A549 (cell line): ENCODE measurements at regions of chr10 and their contacts with region 1.

Region 1: DNA sequence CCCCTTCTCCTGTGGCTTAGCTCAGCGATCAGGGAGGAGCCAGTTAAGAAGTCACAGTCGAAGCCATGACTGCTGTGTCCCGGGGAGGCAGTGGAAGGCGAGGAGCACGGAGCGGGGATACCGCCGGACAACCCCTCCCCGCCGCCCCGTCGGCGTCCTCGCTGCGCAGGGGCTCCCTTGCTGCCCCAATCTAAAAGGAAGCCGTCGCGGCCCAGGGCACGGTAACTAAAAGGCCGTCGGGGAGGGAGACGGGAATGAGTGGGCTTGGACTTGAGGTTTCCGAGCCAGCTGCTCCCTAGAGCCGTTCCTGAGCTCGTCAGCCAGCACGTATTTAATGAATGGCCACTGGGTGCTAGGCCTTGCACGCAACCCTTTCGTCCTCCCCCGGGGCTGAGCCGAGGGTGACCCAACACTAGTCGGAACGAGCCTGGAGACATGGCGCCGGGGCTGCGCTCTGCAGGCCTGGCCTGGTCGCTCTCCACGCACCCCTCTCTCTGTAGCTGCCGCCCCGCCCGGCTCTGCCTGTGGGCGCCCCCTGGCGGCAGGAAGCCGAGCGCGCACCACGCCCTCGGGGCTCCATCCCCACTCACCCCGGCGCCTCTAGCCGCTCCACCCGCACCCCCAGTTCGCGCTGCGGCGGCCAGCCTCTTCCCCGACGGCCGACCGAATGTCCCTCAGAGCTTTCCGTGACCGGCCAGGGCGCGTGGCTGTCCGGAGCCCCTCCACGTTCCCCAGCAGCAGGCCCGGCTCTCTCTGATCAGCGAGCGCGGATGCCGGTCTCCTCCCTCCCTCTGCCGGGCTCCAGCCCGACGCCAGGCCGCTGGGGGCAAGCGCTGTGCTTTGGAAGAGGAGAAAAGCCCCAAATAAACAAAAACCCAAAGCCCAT is 29.3 kb upstream of the KCNK18 start:
- DNase-seq: peak; percentile 62 to 92
- ATAC-seq: peak; percentile 89 to 95
- H3K4me3 ChIP-seq: peak overlapping the region; percentile 55
- H3K27ac ChIP-seq: peak overlapping the region; percentile 71 to 86; a peak in 5 of 6 replicates
- H3K4me1 ChIP-seq: peaks cover 8% of the 10 kb centered on the region; the same call in 2 of the 3 replicates
- CTCF ChIP-seq: peak; percentile 94
- EP300 ChIP-seq: no peak
- POLR2A ChIP-seq: no peak
- RAD21 ChIP-seq: peak; percentile 55 to 72

Region 2: GRCh38 chr10:116683821-116684220 is 484.2 kb before region 1 on chr10:
- CTCF ChIA-PET with region 1: interaction called, 27 read pairs
- POLR2A ChIA-PET with region 1: no interaction called
- DNase-seq: no peak
- ATAC-seq: no peak; a peak in 1 of 6 replicates
- H3K4me3 ChIP-seq: no peak overlapping the region
- H3K27ac ChIP-seq: no peak overlapping the region
- H3K4me1 ChIP-seq: no peaks in the 10 kb centered on the region
- CTCF ChIP-seq: no peak
- EP300 ChIP-seq: no peak
- POLR2A ChIP-seq: no peak
- RAD21 ChIP-seq: no peak

Region 3: GRCh38 chr10:116947842-116948529 is 220.0 kb before region 1 on chr10:
- CTCF ChIA-PET with region 1: interaction called, 10 read pairs
- POLR2A ChIA-PET with region 1: no interaction called
- DNase-seq: peak; percentile 28 to 45
- ATAC-seq: peak; percentile 56 to 72
- H3K4me3 ChIP-seq: peak overlapping the region; percentile 1; the same call in 1 of the 3 replicates
- H3K27ac ChIP-seq: peak overlapping the region; percentile 28 to 67
- H3K4me1 ChIP-seq: peaks cover 20% of the 10 kb centered on the region
- CTCF ChIP-seq: no peak
- EP300 ChIP-seq: no peak
- POLR2A ChIP-seq: no peak
- RAD21 ChIP-seq: no peak

Region 4: DNA sequence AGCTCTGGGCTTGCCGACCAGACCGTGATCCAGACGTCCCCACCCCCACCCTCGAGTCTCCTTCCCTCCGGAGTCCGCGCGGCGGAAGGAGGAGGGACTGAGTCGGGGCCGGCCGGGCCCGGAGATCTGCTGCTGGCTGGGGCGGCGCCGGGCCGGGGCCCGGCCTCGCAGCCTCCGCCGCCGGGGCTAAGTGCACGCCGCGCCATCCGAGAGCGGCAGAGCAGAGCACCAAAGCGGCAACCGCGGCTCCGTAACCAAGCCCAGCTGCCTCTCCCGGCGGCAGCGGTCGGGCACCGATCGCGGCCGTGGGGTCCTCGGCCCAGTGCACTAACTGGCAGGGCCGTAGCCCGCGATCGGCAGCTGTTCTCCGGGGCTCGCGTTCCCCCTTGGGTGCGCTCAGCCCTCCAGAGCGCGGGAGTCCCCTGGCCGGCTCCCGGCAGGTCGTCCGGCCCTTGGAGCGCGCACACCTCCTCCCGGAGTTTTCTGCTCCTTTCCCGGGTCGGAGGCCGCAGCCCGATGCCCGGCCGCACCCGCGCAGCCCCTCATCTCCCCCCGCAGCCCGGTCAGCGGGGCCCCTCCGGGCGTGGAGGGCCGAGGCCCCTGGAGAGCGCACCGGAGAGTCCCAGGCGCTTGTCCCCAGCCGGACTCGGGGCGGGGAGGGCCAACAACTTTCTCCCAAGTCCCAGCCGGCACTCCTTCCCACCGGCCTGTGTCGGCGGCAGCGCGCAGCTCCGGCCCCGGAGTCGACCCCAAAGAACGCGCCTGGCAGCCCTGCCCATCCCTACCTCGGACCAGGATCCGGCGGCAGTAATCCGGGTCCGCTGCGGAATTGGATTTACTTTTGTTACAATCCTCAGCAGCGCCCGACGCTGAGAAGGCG is 30.8 kb before region 1 on chr10:
- CTCF ChIA-PET with region 1: interaction called, 25 read pairs
- POLR2A ChIA-PET with region 1: no interaction called
- DNase-seq: peak; percentile 71 to 84
- ATAC-seq: peak; percentile 86 to 90
- H3K4me3 ChIP-seq: peak overlapping the region; percentile 55
- H3K27ac ChIP-seq: peak overlapping the region; percentile 79 to 91
- H3K4me1 ChIP-seq: 0 out of 3 replicates have a peak, but pooled peaks cover 4% of the 10 kb centered on the region
- CTCF ChIP-seq: no peak
- EP300 ChIP-seq: no peak
- POLR2A ChIP-seq: peak; percentile 77
- RAD21 ChIP-seq: no peak

Region 5: DNA sequence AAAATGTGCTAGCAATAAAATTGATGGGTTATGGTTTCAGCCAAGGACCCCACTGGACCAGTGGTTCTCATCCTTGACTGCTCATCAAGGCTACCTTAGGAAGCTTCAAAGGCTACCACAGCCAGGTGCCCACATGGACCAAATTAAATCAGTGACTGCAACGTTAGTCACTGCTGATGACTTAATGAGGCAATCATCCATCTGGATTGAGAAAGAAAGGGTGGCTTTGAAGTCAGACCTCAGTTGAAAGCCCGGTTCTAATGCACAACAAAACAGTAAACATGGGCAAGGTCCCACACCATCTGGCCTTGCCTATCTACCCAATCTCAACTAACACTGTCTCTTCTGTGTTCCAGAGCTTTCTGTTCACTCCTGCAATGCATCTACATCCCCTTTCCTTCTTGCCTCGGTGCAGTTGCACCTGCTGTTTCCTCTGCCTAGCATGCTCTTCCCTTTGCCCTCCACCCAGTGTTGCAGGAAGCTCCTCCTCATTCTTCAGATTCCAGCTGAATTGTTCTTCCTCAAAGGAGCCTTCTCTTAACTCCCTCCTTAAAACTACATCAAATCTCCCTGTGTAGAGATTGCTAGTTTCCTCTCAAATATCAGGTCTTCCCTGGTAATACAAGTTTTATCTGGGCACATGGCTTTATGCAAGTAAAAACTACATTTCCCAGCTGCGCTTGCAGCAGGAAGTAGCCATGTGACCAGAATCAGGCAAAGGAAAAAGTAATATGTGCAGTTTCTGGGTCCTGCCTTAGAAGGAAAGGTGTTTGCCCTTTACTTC is 19.0 kb after region 1 on chr10:
- CTCF ChIA-PET with region 1: interaction called, 13 read pairs
- POLR2A ChIA-PET with region 1: no interaction called
- DNase-seq: peak in 1 of 2 experiments; percentile 20
- ATAC-seq: peak in 1 of 2 experiments; percentile 70; a peak in 3 of 6 replicates
- H3K4me3 ChIP-seq: no peak overlapping the region
- H3K27ac ChIP-seq: no peak overlapping the region
- H3K4me1 ChIP-seq: peaks cover 5% of the 10 kb centered on the region; the same call in 1 of the 3 replicates
- CTCF ChIP-seq: no peak
- EP300 ChIP-seq: no peak
- POLR2A ChIP-seq: no peak
- RAD21 ChIP-seq: no peak

Region 6: DNA sequence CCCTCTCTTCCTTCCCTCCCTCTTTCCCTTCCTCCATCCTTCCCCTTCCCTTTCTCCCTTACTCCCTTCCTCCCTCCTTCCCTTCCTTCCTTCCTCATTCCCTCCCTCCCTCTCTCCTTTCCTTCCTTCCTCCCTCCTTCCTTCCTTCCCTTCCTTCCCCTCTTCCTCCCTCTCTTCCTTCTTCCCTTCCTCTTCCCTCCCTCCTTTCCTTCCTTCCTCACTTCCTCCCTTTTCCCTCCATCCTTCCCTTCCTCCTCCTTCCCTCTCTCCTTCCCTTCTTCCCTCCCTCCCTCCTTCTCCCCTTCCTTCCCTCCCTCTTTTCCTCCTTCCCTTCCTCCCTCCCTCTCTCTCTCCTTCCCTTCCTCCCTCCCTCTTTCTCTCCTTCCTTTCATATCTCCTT is 60.2 kb after region 1 on chr10:
- CTCF ChIA-PET with region 1: no interaction called
- POLR2A ChIA-PET with region 1: no interaction called
- DNase-seq: no peak
- ATAC-seq: no peak
- H3K4me3 ChIP-seq: no peak overlapping the region
- H3K27ac ChIP-seq: no peak overlapping the region
- H3K4me1 ChIP-seq: no peaks in the 10 kb centered on the region
- CTCF ChIP-seq: no peak
- EP300 ChIP-seq: no peak
- POLR2A ChIP-seq: no peak
- RAD21 ChIP-seq: no peak